ENCODE measurements at regions of chr1 and their contacts with region 1.

Region 1: DNA sequence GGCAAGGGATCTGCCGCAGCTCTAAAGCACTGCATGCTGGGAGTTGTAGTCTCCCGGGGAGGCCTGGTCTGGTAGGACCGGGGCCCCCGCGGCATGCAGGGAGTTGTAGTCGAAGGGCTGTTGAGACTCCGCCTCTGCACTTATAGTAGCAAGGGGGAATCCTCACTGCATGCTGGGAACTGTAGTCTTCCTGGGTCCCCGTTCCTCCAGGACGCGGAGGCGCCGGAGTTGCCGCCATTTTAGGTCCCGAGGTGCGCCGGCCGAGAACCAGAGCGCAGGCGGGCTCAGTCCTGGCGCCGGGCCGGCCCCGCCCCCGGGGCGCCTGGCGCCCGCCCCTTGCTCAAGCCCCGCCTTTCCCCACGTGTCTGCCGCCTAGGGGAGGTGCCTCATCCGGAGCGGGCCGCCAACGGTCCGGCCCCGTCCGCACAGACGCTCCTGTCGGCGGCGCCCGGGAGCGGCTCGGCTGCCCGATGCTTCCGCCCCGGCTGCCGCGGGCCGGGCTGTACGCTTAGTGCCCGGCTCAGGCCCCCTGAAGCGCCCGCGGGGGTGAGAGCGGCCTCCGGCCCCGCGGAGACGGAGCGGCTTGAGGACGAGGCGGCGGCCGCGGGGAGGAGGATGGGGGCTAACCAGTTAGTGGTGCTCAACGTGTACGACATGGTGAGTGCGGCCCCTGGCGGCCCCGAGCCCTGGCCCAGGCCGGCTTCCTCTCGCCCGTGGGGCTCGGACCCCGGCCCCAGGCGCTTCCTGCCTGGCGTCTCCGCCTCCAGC is at the start of gene DESI2:
- DNase-seq: peak; percentile 100
- H3K4me3 ChIP-seq: peak within 1 kb of the TSS; percentile 82
- H3K27ac ChIP-seq: peak within 1 kb of the TSS; percentile 81
- H3K4me1 ChIP-seq: peaks cover 27% of the 10 kb centered on the region
- CTCF ChIP-seq: peak; percentile 71
- total RNA-seq, gene DESI2: 40.0 and 40.6 TPM in 2 replicates

Region 2: DNA sequence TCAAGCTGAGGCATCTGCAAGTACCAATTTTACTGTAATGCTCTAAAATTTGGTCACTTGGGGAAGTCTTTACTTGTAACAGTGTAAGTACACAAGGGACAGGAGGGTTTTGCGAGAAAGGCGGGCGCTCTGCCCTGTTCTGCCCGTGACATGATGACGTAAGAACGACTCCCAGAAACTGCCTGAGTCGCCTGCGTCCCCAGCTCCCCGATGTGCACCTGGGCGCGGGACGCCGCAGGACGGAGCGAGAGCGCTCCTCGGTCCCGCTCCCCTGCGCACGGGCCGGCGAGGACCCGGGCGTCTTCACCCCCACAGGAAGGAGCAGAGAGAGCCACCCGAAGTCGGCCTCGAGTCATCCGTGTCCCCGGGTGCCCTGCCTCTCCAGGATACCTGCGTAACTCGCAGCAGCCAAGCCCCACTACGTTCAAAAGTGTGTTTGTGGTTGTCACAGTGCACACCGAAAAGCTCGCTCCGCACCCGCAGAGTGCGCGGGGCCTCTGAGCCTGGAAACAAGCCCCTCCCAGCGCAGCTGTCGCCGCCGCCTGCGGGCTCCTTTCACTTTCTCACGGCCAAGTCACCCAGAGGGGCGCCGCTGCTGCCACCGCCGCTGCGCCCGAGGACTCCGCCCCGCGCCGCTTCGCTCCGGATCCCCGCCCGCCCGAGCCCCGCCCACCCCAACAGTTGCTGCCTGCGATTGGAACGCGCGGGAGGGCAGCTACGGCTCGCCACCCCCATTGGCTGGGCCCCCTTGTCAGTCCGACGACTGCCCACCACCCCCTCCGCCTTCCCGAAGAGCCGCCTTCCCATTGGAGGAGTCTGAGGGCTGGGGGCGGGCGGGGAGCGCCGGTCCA is 605.0 kb before region 1 on chr1:
- CTCF ChIA-PET with region 1: no interaction called
- POLR2A ChIA-PET with region 1: no interaction called
- intact Hi-C with region 1: loop called (anchors 5 kb)
- DNase-seq: no peak
- H3K4me3 ChIP-seq: peak overlapping the region; percentile 81
- H3K27ac ChIP-seq: peak overlapping the region; percentile 71
- H3K4me1 ChIP-seq: peaks cover 41% of the 10 kb centered on the region
- CTCF ChIP-seq: no peak

Region 3: DNA sequence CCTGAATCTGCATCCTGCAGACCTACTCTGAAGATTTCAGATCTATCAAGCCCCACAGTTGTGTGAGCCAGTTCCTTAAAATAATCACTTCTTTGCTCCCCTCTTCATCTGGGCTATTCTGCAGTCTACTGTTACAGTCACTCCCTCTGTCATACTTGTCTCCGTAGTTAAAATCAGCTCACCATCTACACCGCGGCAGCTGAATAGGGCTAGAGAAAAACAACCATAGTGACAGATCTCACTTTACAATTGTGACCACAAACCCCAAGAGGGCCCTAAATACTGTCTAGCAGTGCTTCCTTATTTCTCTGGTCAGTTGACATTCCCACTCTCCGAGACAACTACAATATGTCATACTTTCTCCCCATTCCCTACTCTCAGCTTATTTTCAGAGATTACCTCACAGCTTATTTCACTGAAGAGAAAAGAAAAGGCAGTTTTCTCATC is 12.9 kb after region 1 on chr1:
- CTCF ChIA-PET with region 1: no interaction called
- POLR2A ChIA-PET with region 1: interaction called, 16 read pairs
- intact Hi-C with region 1: loop called (anchors 1 kb)
- DNase-seq: peak; percentile 63
- H3K4me3 ChIP-seq: peak overlapping the region; percentile 18
- H3K27ac ChIP-seq: peak overlapping the region; percentile 55
- H3K4me1 ChIP-seq: peaks cover 47% of the 10 kb centered on the region
- CTCF ChIP-seq: no peak

Region 4: DNA sequence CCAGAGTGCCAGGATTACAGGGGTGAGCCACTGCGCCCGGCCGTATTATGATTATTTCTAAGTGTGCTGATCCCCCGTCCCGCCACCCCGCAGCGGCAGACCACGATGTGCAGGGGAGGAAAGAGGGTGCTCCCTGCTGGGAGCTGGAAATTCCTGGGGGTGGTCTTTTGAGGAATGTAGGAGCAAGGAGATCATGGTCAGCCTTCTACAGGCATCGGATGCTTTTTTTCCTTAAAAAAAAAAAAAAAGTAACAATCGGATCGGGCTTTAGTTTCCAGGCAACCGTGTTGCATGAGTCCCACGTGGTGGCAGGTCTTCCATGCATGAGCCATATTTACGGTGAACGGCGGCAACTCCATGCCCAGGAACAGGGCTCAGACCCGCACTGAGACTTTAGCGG is 108.4 kb after region 1 on chr1:
- CTCF ChIA-PET with region 1: no interaction called
- POLR2A ChIA-PET with region 1: no interaction called
- intact Hi-C with region 1: no loop called
- DNase-seq: no peak
- H3K4me3 ChIP-seq: no peak overlapping the region
- H3K27ac ChIP-seq: no peak overlapping the region
- H3K4me1 ChIP-seq: no peaks in the 10 kb centered on the region
- CTCF ChIP-seq: no peak

Measured in OCI-LY7 (cell line).